ENCODE measurements at regions of chr16 and their contacts with region 1.

Region 1: GRCh38 chr16:47141773-47142485 is 1.8 kb downstream of the NETO2 start:
- DNase-seq: peak; percentile 88 to 92
- H3K4me3 ChIP-seq: peak overlapping the region; percentile 55
- H3K4me1 ChIP-seq: peaks cover 6% of the 10 kb centered on the region; the same call in 1 of the 2 replicates
- H3K27me3 ChIP-seq: no peaks in the 10 kb centered on the region

Region 2: DNA sequence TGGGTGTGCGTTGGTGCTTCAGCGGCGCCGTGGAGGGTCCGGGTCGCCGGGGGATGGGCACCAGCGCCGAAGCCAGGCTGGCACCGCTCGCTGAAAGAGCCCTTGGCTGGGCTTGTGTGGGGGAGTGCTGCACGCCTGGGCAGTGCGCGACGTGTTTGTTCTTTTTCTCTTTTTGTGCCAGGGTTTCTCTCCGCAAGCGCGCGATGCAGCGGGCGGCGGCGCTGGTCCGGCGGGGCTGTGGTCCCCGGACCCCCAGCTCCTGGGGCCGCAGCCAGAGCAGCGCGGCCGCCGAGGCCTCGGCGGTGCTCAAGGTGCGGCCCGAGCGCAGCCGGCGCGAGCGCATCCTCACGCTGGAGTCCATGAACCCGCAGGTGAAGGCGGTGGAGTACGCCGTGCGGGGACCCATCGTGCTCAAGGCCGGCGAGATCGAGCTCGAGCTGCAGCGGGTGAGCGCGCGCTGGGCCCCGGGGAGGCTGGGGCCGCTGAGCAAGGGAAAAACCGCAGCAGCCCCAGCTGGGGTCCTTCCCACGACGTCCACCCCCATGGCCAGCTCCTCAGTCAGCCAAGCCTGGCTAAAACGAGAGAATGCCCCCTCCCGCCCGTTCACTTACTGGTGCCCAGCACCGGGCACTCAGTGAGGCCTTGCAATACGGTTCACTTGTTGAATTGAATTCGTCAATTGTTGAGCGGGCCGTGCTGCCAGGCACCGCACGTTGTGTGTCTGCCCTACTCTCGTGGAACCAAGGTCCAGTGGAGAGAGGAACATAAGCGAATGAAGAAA is 257.2 kb before region 1 on chr16:
- in situ Hi-C with region 1: no loop called
- DNase-seq: peak in 1 of 2 experiments; percentile 46
- H3K4me3 ChIP-seq: peak overlapping the region; percentile 92
- H3K4me1 ChIP-seq: peaks cover 19% of the 10 kb centered on the region
- H3K27me3 ChIP-seq: no peaks in the 10 kb centered on the region

Region 3: GRCh38 chr16:47431960-47432359 is 290.0 kb after region 1 on chr16:
- in situ Hi-C with region 1: no loop called
- DNase-seq: no peak
- H3K4me3 ChIP-seq: no peak overlapping the region
- H3K4me1 ChIP-seq: peaks cover 3% of the 10 kb centered on the region; the same call in 1 of the 2 replicates
- H3K27me3 ChIP-seq: no peaks in the 10 kb centered on the region

Region 4: DNA sequence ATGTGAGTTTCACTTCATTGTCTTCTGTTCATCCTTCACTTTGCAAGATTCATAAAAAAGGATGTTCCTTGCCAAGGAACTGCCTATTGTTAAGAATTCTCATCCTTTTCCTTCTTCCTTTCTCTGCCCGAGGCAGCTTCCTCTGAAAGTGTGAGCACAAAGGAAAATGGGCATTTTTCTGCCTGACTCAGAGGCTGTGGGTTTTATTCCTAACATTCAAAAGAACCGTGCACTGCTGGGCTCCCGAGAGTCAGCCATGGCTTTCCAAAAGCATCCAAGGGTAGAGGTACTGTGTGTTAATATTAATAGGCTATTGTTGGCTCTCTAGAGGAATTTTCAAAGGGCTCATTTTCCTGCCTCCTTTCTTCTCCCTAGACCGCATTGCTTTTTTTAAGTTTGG is 724.5 kb after region 1 on chr16:
- in situ Hi-C with region 1: loop called (anchors 10 kb)
- DNase-seq: no peak
- H3K4me3 ChIP-seq: no peak overlapping the region
- H3K4me1 ChIP-seq: peaks cover 28% of the 10 kb centered on the region
- H3K27me3 ChIP-seq: no peaks in the 10 kb centered on the region